Panc1 (cell line): ENCODE measurements at regions of chr20 and their contacts with region 1.

Region 1: GRCh38 chr20:62350093-62350628 is 17.0 kb downstream of the LAMA5 start:
- DNase-seq: no peak
- ATAC-seq: peak; percentile 54
- H3K4me3 ChIP-seq: no peak overlapping the region
- H3K27ac ChIP-seq: peak overlapping the region; percentile 81
- H3K4me1 ChIP-seq: peaks cover 53% of the 10 kb centered on the region
- H3K27me3 ChIP-seq: no peaks in the 10 kb centered on the region
- CTCF ChIP-seq: no peak

Region 2: DNA sequence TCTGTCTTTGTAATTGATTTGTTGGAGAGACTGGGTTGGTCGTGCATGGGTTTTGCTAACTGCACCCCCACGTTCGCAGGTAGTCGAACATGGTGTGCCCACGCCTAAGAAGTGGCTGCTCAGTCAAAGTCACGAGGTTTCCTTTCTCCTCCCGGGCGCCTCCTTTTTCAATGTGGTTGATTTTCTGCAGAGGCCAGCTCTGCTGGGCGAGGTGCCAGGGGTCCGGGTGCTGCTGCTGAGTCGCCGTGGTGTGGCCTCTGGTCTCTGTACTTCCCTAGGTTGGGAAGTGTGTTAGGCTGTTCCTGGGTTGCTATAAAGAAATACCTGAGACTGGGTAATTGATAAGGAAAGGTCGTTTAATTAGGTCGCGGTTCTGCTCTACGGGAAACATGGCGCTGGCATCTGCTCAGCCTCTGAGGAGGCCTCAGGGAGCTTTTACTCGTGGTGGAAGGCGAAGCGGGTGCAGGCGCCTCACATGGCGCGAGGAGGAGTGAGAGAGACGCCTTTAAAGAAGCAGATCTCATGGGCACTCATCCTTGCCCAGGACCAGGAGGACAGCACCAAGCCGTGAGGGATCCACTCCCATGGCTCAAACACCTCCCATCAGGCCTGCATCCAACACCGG is 97.7 kb before region 1 on chr20:
- CTCF ChIA-PET with region 1: no interaction called
- POLR2A ChIA-PET with region 1: no interaction called
- in situ Hi-C with region 1: no loop called
- intact Hi-C with region 1: no loop called
- DNase-seq: no peak
- ATAC-seq: no peak
- H3K4me3 ChIP-seq: no peak overlapping the region
- H3K27ac ChIP-seq: no peak overlapping the region
- H3K4me1 ChIP-seq: no peaks in the 10 kb centered on the region; the same call in 1 of the 2 replicates
- H3K27me3 ChIP-seq: no peaks in the 10 kb centered on the region
- CTCF ChIP-seq: no peak

Region 3: DNA sequence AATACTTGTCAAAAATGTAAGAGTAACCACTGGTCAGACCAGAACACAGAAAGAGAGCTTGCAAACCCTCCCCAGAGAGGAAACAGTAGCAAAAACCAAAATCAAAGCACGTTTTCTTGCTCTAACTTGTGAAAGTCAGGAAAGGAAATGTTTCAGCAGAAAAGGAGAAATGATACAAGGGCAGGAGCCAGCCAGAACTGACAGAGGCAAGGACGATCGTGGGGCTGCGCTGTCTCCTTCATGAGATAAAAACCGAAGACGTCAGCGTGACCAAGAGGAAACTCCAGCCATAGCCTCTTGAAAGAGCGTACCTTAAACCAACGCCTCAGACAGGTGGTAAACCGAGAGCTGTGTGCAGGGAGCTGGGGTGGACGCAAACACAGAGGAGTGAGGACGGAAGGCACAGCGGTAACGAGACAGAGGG is 10.5 kb before region 1 on chr20:
- CTCF ChIA-PET with region 1: no interaction called
- POLR2A ChIA-PET with region 1: interaction called, 15 read pairs
- in situ Hi-C with region 1: no loop called
- intact Hi-C with region 1: no loop called
- DNase-seq: no peak
- ATAC-seq: no peak
- H3K4me3 ChIP-seq: no peak overlapping the region
- H3K27ac ChIP-seq: no peak overlapping the region
- H3K4me1 ChIP-seq: no peaks in the 10 kb centered on the region
- H3K27me3 ChIP-seq: no peaks in the 10 kb centered on the region
- CTCF ChIP-seq: no peak